ENCODE measurements at regions of chr1 and their contacts with region 1.

Region 1: GRCh38 chr1:198465201-198466144 is 75.0 kb downstream of the ATP6V1G3 start:
- DNase-seq: no peak
- H3K4me3 ChIP-seq: no peak overlapping the region
- H3K27ac ChIP-seq: no peak overlapping the region
- H3K4me1 ChIP-seq: no peaks in the 10 kb centered on the region
- H3K27me3 ChIP-seq: no peaks in the 10 kb centered on the region
- CTCF ChIP-seq: peak in 3 of 4 experiments; percentile 25 to 66 (median 59)
- POLR2A ChIP-seq: no peak

Region 2: DNA sequence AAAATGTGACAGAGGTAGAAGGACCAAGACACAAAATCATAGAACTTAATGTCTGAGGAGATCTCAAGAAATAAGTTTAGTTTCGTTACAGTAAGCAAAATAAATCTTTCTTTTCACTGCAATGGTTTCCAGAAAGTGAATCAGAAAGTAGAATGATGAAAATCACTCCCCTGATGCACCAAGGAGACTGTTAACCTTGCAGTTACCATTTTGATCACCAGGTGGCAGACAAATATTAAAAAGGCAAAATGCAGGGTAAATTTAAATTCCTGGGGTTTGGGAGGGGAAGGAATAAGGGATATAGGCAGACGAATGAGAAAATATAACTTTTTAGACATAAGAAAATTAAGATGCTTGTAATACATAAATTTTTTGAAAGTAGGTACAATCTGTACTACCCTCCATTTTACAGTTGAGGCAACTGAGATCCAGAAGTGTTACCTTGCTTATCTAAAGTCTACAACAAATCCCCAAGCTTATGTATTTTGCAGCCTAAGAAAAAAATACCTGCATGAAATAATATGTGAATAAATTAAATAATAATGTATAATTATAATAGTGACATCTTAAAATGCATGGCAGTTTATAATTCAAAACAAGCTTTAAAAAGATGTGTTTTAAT is 944.2 kb before region 1 on chr1:
- intact Hi-C with region 1: loop called (anchors 10 kb)
- DNase-seq: no peak
- H3K4me3 ChIP-seq: no peak overlapping the region
- H3K27ac ChIP-seq: no peak overlapping the region
- H3K4me1 ChIP-seq: no peaks in the 10 kb centered on the region
- H3K27me3 ChIP-seq: no peaks in the 10 kb centered on the region
- CTCF ChIP-seq: peak in 3 of 4 experiments; percentile 26 to 46 (median 40)
- POLR2A ChIP-seq: no peak

Region 3: GRCh38 chr1:198088360-198089071 is 377.0 kb before region 1 on chr1:
- intact Hi-C with region 1: loop called (anchors 10 kb)
- DNase-seq: no peak
- H3K4me3 ChIP-seq: no peak overlapping the region
- H3K27ac ChIP-seq: no peak overlapping the region
- H3K4me1 ChIP-seq: no peaks in the 10 kb centered on the region
- H3K27me3 ChIP-seq: no peaks in the 10 kb centered on the region
- CTCF ChIP-seq: peak in 3 of 4 experiments; percentile 14 to 44 (median 28)
- POLR2A ChIP-seq: no peak

Region 4: GRCh38 chr1:198612471-198613260 is 147.2 kb after region 1 on chr1:
- intact Hi-C with region 1: no loop called
- DNase-seq: no peak
- H3K4me3 ChIP-seq: no peak overlapping the region
- H3K27ac ChIP-seq: no peak overlapping the region
- H3K4me1 ChIP-seq: no peaks in the 10 kb centered on the region
- H3K27me3 ChIP-seq: no peaks in the 10 kb centered on the region
- CTCF ChIP-seq: no peak
- POLR2A ChIP-seq: no peak

Measured in prostate gland (tissue), 2 donors.